IMR-90 (cell line): ENCODE measurements at regions of chr19 and their contacts with region 1.

Region 1: DNA sequence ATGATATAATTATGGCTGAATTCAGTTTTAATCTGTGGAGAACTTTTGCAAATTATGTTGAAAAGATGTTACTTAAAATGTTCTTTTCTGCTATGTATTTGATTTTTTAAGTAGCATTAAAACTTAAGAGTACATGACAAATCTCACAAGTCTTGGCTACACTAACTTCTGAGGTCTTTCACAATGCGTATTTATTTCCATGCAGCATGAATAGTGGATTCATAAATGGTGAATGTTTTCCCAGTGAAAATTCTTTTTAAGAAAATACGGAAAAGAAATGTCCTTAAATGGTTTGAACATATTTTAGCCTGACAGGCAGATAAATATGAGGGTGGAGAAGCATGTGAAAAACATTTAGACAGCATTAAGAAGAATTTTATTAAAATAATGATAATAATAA is 30.2 kb downstream of the GARRE1 start:
- DNase-seq: no peak
- ATAC-seq: no peak; the same call in 1 of the 2 replicates
- H3K4me3 ChIP-seq: no peak overlapping the region
- H3K27ac ChIP-seq: no peak overlapping the region
- H3K4me1 ChIP-seq: peaks cover 2% of the 10 kb centered on the region; the same call in 1 of the 2 replicates
- H3K27me3 ChIP-seq: no peaks in the 10 kb centered on the region
- CTCF ChIP-seq: no peak
- POLR2A ChIP-seq: no peak
- RAD21 ChIP-seq: no peak

Region 2: GRCh38 chr19:34244611-34245299 is 39.8 kb before region 1 on chr19:
- CTCF ChIA-PET with region 1: no interaction called
- POLR2A ChIA-PET with region 1: no interaction called
- dilution Hi-C with region 1: no loop called
- in situ Hi-C with region 1: no loop called
- intact Hi-C with region 1: loop called (anchors 1 kb)
- DNase-seq: peak; percentile 38
- ATAC-seq: peak; percentile 63
- H3K4me3 ChIP-seq: no peak overlapping the region
- H3K27ac ChIP-seq: no peak overlapping the region
- H3K4me1 ChIP-seq: peaks cover 2% of the 10 kb centered on the region; the same call in 1 of the 2 replicates
- H3K27me3 ChIP-seq: no peaks in the 10 kb centered on the region
- CTCF ChIP-seq: no peak
- POLR2A ChIP-seq: no peak
- RAD21 ChIP-seq: no peak

Region 3: GRCh38 chr19:34269968-34270621 is 14.4 kb before region 1 on chr19:
- CTCF ChIA-PET with region 1: no interaction called
- POLR2A ChIA-PET with region 1: no interaction called
- dilution Hi-C with region 1: no loop called
- in situ Hi-C with region 1: no loop called
- intact Hi-C with region 1: no loop called
- DNase-seq: peak; percentile 66
- ATAC-seq: peak; percentile 14
- H3K4me3 ChIP-seq: no peak overlapping the region
- H3K27ac ChIP-seq: peak overlapping the region; percentile 94
- H3K4me1 ChIP-seq: peaks cover 35% of the 10 kb centered on the region
- H3K27me3 ChIP-seq: no peaks in the 10 kb centered on the region
- CTCF ChIP-seq: no peak
- POLR2A ChIP-seq: no peak
- RAD21 ChIP-seq: no peak

Region 4: DNA sequence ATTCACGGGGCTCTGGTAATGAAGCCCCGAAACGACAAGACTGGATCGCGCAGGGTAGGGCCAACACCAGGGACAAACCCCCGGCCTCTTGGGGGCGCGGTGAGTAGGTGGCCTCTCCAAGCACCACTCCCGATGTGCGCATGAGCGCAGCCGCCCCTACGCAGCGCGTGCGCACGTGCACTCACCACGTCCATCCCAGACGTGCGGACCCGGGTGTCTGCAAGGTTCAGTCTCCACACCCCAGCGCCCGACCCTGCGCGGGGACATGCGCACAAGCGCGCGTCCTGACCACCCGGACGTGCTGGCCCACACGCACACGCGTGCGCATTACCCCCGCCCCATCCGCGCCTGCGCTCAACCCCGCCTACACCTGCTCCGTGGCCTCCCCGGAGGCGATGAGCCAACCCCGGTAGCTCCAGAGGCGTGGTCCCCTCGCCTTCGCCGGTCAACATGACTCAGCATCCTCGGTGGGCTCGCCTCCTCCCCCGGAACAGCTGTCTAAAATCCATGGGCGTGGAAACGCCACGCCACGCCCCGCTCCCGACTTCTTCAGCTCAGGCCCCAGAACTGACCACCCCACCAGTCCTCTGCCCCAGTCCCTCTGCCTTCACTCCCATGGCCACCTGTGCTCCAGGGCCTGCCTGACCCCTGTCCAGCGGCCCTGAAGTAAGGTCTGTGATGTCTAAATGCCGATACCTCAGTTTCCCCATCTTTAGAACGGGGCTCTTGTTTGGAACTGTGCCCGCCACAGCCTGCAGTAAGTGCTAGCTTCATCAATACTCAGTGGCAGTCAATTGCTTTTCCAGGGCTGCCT is 74.8 kb after region 1 on chr19:
- CTCF ChIA-PET with region 1: no interaction called
- POLR2A ChIA-PET with region 1: no interaction called
- dilution Hi-C with region 1: no loop called
- in situ Hi-C with region 1: no loop called
- intact Hi-C with region 1: no loop called
- DNase-seq: peak; percentile 96
- ATAC-seq: peak; percentile 95
- H3K4me3 ChIP-seq: peak overlapping the region; percentile 31
- H3K27ac ChIP-seq: peak overlapping the region; percentile 65
- H3K4me1 ChIP-seq: peaks cover 9% of the 10 kb centered on the region
- H3K27me3 ChIP-seq: no peaks in the 10 kb centered on the region
- CTCF ChIP-seq: peak; percentile 53
- POLR2A ChIP-seq: no peak
- RAD21 ChIP-seq: no peak